ENCODE measurements at regions of chr3 and their contacts with region 1.

Region 1: GRCh38 chr3:27559835-27560234 is 75.7 kb upstream of the SLC4A7 start:
- DNase-seq: peak; percentile 99
- H3K4me3 ChIP-seq: no peak overlapping the region
- H3K27ac ChIP-seq: peak overlapping the region; percentile 85
- H3K4me1 ChIP-seq: peaks cover 18% of the 10 kb centered on the region
- H3K27me3 ChIP-seq: no peaks in the 10 kb centered on the region
- CTCF ChIP-seq: no peak
- POLR2A ChIP-seq: peak; percentile 27

Region 2: GRCh38 chr3:26825454-26825853 is 734.4 kb before region 1 on chr3:
- CTCF ChIA-PET with region 1: no interaction called
- POLR2A ChIA-PET with region 1: no interaction called
- dilution Hi-C with region 1: no loop called
- intact Hi-C with region 1: no loop called
- DNase-seq: no peak
- H3K4me3 ChIP-seq: no peak overlapping the region
- H3K27ac ChIP-seq: no peak overlapping the region
- H3K4me1 ChIP-seq: no peaks in the 10 kb centered on the region
- H3K27me3 ChIP-seq: no peaks in the 10 kb centered on the region
- CTCF ChIP-seq: no peak
- POLR2A ChIP-seq: no peak

Region 3: DNA sequence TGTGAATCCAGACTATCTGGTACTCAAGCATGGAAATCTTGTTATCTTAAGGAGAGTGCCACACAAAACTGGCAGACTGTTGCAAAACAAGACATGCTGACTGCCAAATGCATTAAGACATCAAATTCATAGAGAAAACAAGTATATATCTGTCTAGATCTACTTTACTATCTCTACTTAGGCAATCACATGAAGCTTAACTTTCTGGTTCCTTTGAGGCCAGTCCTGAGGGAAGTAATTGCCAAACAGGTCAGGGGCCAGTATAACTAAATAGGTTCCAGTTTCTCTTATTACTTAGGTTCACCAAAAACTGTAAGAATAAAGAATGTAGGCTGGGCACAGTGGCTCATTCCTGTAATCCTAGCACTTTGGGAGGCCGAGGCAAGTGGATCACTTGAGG is 59.8 kb before region 1 on chr3:
- CTCF ChIA-PET with region 1: no interaction called
- POLR2A ChIA-PET with region 1: no interaction called
- dilution Hi-C with region 1: no loop called
- intact Hi-C with region 1: no loop called
- DNase-seq: no peak
- H3K4me3 ChIP-seq: no peak overlapping the region
- H3K27ac ChIP-seq: no peak overlapping the region
- H3K4me1 ChIP-seq: peaks cover 3% of the 10 kb centered on the region
- H3K27me3 ChIP-seq: no peaks in the 10 kb centered on the region
- CTCF ChIP-seq: no peak
- POLR2A ChIP-seq: no peak

Region 4: GRCh38 chr3:27544372-27544865 is 15.4 kb before region 1 on chr3:
- CTCF ChIA-PET with region 1: interaction called, 3 read pairs
- POLR2A ChIA-PET with region 1: no interaction called
- dilution Hi-C with region 1: no loop called
- intact Hi-C with region 1: loop called (anchors 1 kb)
- DNase-seq: peak; percentile 70
- H3K4me3 ChIP-seq: no peak overlapping the region
- H3K27ac ChIP-seq: peak overlapping the region; percentile 19
- H3K4me1 ChIP-seq: peaks cover 12% of the 10 kb centered on the region
- H3K27me3 ChIP-seq: no peaks in the 10 kb centered on the region
- CTCF ChIP-seq: no peak
- POLR2A ChIP-seq: no peak

Region 5: GRCh38 chr3:27659279-27660021 is 99.6 kb after region 1 on chr3:
- CTCF ChIA-PET with region 1: interaction called, 3 read pairs
- POLR2A ChIA-PET with region 1: no interaction called
- dilution Hi-C with region 1: no loop called
- intact Hi-C with region 1: loop called (anchors 1 kb)
- DNase-seq: peak; percentile 55
- H3K4me3 ChIP-seq: no peak overlapping the region
- H3K27ac ChIP-seq: no peak overlapping the region
- H3K4me1 ChIP-seq: peaks cover 13% of the 10 kb centered on the region
- H3K27me3 ChIP-seq: no peaks in the 10 kb centered on the region
- CTCF ChIP-seq: peak; percentile 74 to 91
- POLR2A ChIP-seq: no peak

Measured in endothelial cell of umbilical vein (primary cell).